ENCODE measurements at regions of chr4 and their contacts with region 1.

Region 1: GRCh38 chr4:158624889-158625478 is 46.7 kb downstream of the C4orf46 start:
- DNase-seq: peak in 2 of 4 donors; percentile 6 to 25
- ATAC-seq: peak; percentile 88
- H3K4me3 ChIP-seq: no peak overlapping the region
- H3K27ac ChIP-seq: no peak overlapping the region
- H3K4me1 ChIP-seq: no peaks in the 10 kb centered on the region
- H3K27me3 ChIP-seq: no peaks in the 10 kb centered on the region
- CTCF ChIP-seq: peak; percentile 66 to 69

Region 2: DNA sequence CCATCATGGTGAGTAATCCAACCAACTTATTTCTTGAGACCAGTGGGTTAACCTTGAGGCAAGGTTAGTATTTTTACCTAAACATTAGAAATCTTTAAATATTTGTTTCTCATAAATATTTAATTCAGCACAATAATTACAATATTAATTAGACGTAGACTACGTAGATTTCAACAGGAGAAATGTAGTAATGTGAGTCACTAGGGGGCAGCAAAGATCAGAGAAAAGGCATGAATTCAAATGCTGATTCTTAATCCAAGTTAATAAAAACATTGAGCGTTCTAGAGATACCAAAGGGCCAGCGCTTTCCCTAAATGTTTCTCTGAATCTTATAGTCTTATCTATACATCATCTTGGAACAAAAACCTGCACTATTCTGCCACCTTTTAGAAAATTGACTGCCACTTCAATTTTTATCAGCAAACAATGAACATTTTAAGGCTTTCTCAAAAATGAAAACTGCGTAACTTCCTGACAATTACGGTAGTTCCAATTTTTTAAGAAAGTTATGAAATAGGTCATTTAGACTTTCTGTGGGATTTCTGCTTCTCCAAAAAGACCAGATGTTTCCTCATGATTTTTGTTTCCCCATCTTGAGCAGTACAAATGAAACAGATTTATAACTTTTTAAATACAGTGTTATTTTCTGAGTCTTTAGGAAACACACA is 632.8 kb before region 1 on chr4:
- intact Hi-C with region 1: loop called in 1 of 2 experiments (anchors 10 kb)
- DNase-seq: peak in 2 of 4 donors; percentile 75 to 81
- ATAC-seq: peak; percentile 96
- H3K4me3 ChIP-seq: peak overlapping the region; percentile 12 to 27
- H3K27ac ChIP-seq: peak overlapping the region; percentile 63 to 83
- H3K4me1 ChIP-seq: peaks cover 3 to 12% of the 10 kb centered on the region in 2 donors
- H3K27me3 ChIP-seq: no peaks in the 10 kb centered on the region
- CTCF ChIP-seq: peak; percentile 57 to 62

Region 3: GRCh38 chr4:158259955-158260575 is 364.9 kb before region 1 on chr4:
- intact Hi-C with region 1: loop called in 1 of 2 experiments (anchors 10 kb)
- DNase-seq: peak in 1 of 4 donors; percentile 13
- ATAC-seq: no peak
- H3K4me3 ChIP-seq: no peak overlapping the region
- H3K27ac ChIP-seq: no peak overlapping the region
- H3K4me1 ChIP-seq: peaks cover 0 to 4% of the 10 kb centered on the region in 2 donors
- H3K27me3 ChIP-seq: no peaks in the 10 kb centered on the region
- CTCF ChIP-seq: peak; percentile 25 to 38

Region 4: DNA sequence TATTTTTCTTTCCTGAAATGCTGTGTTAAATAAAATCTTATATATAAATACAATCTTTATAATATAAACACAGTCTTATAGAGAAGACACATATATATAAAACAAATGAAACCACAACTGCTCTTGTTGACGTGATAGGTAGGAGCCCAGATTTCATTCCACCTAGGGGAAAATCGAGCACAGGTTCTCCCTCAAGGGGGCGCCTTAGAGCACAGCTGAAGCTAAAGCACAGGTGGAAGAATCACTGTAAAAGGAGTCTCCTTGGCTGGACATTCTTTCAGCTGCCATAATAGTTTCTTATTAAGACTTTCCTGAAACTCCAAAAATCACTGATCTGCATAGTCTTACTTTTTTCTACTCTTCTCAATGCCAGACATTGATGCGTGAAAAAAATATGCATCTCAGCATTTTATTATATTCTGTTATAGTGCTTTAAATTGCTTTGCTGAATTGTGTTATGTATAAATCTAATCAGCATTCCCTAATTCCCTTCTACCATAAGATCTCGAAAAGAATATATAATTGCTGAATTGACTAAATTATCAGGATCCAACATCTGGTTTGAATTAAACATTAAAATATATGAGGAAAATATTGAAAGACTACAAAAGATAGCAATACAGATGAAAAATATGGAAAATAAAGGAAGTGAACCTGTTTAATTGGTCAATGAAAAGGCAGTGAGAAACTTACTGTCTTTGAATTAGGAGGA is 128.8 kb before region 1 on chr4:
- intact Hi-C with region 1: loop called in 1 of 2 experiments (anchors 10 kb)
- DNase-seq: peak in 2 of 4 donors; percentile 2 to 33
- ATAC-seq: peak; percentile 71
- H3K4me3 ChIP-seq: no peak overlapping the region
- H3K27ac ChIP-seq: no peak overlapping the region
- H3K4me1 ChIP-seq: no peaks in the 10 kb centered on the region
- H3K27me3 ChIP-seq: no peaks in the 10 kb centered on the region
- CTCF ChIP-seq: peak; percentile 41 to 64

Region 5: DNA sequence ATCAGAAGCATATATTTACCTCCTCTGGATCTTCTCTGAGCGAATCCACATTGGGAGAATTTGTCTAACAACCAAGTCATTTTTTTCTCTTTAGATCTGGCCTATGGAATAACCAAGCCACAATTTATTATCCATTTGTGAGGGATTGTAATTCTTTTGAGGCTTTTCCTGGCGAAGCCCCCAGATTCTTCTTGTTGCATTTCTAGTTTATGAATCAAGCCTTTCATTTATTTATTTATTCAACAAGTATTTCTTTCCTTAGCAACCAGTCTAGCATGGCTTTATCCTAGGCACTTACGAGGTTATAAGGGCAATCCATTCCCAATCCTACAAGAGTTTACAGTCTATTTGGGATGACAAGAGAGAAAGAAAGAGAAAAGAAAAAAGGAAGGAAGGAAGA is 125.4 kb after region 1 on chr4:
- intact Hi-C with region 1: no loop called
- DNase-seq: no peak
- ATAC-seq: no peak
- H3K4me3 ChIP-seq: no peak overlapping the region
- H3K27ac ChIP-seq: peak overlapping the region in 1 of 2 donors; percentile 4
- H3K4me1 ChIP-seq: no peaks in the 10 kb centered on the region
- H3K27me3 ChIP-seq: no peaks in the 10 kb centered on the region
- CTCF ChIP-seq: no peak

Region 6: DNA sequence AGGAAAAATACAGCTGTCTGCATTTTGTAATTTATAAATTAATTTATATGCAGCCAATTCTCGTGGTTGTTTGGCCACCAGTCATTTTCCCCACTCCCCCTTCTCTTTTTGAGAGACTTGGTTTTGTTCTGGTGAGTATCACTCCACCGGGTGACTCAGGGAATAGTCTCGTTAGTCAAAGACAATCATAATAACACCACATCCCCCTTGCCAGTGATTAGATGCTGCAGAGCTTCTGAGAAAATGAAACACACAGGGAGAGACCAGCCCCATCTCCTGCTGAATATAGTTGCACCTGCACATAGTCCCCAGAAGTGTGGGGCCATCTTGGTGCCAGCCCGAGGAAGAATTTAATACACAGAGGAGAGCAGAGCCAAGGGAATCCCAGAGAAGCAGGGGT is 135.9 kb after region 1 on chr4:
- intact Hi-C with region 1: no loop called
- DNase-seq: no peak
- ATAC-seq: no peak
- H3K4me3 ChIP-seq: no peak overlapping the region
- H3K27ac ChIP-seq: no peak overlapping the region
- H3K4me1 ChIP-seq: no peaks in the 10 kb centered on the region
- H3K27me3 ChIP-seq: no peaks in the 10 kb centered on the region
- CTCF ChIP-seq: no peak

Region 7: GRCh38 chr4:158782551-158783360 is 157.8 kb after region 1 on chr4:
- intact Hi-C with region 1: no loop called
- DNase-seq: no peak
- ATAC-seq: peak; percentile 22
- H3K4me3 ChIP-seq: no peak overlapping the region
- H3K27ac ChIP-seq: peak overlapping the region in 1 of 2 donors; percentile 31
- H3K4me1 ChIP-seq: peaks cover 29 to 85% of the 10 kb centered on the region in 2 donors
- H3K27me3 ChIP-seq: no peaks in the 10 kb centered on the region
- CTCF ChIP-seq: no peak

Region 8: GRCh38 chr4:159097785-159098184 is 472.8 kb after region 1 on chr4:
- intact Hi-C with region 1: no loop called
- DNase-seq: no peak
- ATAC-seq: peak; percentile 74
- H3K4me3 ChIP-seq: no peak overlapping the region
- H3K27ac ChIP-seq: no peak overlapping the region
- H3K4me1 ChIP-seq: peaks cover 4 to 9% of the 10 kb centered on the region in 2 donors
- H3K27me3 ChIP-seq: peaks cover 0 to 5% of the 10 kb centered on the region in 2 donors
- CTCF ChIP-seq: no peak

Measured in left lung (tissue), 14 donors.